ENCODE measurements at regions of chr19 and their contacts with region 1.

Region 1: GRCh38 chr19:9768175-9769112 is at the start of gene ZNF846:
- DNase-seq: peak; percentile 92 to 97 (median 95)
- H3K4me3 ChIP-seq: peak within 1 kb of the TSS; percentile 35 to 99 (median 70)
- H3K27ac ChIP-seq: peak within 1 kb of the TSS; percentile 74 to 94 (median 91)
- H3K4me1 ChIP-seq: peaks cover 10 to 13% of the 10 kb centered on the region in 2 donors
- H3K27me3 ChIP-seq: no peaks in the 10 kb centered on the region
- CTCF ChIP-seq: peak in 1 of 6 experiments; percentile 4
- POLR2A ChIP-seq: peak; percentile 40 to 81
- total RNA-seq, gene ZNF846: 7.1 to 20.3 (median 9.8) TPM

Region 2: DNA sequence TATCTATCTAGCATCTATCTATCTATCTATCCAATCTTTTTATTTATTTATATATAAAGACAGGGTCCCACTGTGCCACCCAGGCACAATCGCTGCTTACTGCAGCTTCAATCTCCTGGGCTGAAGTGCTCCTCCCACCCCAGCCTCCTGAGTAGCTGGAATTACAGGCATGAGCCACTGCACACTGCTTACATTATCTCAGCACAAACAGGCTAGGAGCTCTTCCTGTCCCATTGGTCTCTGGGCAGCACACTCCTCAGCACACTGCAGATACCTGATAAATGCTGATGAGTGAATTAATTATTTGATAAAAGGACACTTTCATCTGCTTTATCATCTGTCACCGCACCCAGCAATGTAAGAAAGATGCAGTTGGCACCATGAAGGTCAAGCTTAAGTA is 109.7 kb before region 1 on chr19:
- intact Hi-C with region 1: loop called in 1 of 2 experiments (anchors 10 kb)
- DNase-seq: no peak
- H3K4me3 ChIP-seq: no peak overlapping the region
- H3K27ac ChIP-seq: no peak overlapping the region
- H3K4me1 ChIP-seq: no peaks in the 10 kb centered on the region
- H3K27me3 ChIP-seq: no peaks in the 10 kb centered on the region
- CTCF ChIP-seq: no peak
- POLR2A ChIP-seq: no peak

Region 3: DNA sequence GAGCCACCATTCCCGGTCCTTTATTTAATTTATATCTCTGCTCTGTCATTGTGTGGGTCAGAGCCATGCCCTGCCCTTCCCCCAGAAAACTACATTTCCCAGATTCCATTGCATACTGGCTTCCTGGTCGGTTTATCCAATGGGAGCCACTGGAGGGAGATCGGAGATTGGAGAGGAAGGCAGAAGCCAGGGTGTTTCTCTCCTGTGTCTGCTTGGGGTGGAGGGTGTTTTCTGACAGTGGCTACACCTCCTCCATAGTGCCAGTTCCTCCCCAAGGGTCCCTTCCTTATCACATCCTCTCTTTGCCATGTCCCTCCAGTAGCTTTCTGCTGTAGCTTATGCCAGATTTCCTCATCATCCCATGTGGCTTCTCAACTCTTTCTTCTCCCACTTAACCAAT is 148.9 kb after region 1 on chr19:
- intact Hi-C with region 1: no loop called
- DNase-seq: peak in 6 of 7 donors; percentile 25 to 59 (median 46)
- H3K4me3 ChIP-seq: no peak overlapping the region
- H3K27ac ChIP-seq: no peak overlapping the region
- H3K4me1 ChIP-seq: peaks cover 5 to 13% of the 10 kb centered on the region in 2 donors
- H3K27me3 ChIP-seq: no peaks in the 10 kb centered on the region
- CTCF ChIP-seq: no peak
- POLR2A ChIP-seq: no peak

Region 4: DNA sequence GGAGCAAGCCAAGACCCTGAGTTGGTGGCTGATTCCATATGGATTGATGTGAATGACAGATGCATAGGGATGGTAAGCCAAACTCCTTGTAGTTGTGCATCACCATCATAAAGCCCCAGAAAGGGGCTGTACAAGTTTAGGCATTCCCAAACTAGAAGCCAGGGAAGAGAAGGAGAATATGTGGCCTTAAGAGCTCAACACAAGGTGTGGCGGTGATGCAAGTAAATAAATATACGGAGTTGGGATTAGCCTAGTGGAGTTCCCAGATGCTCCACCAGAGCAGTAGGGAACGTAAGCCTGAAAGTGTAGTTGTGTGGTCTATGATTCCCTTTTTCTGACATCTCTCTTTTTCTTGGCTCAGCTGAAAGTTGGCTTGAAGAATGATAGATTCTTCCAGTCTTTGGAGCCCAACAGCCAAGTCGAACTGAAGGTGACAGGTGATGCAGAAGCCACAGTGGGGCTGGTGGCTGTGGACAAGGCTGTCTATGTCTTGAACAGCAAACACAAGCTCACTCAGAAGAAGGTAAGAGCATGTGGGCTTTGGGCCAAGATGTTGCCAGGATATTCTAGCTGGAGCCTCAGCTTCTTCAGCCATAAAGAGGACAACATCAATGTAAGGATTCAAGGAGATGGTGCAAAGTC is 275.0 kb after region 1 on chr19:
- intact Hi-C with region 1: no loop called
- DNase-seq: no peak
- H3K4me3 ChIP-seq: no peak overlapping the region
- H3K27ac ChIP-seq: no peak overlapping the region
- H3K4me1 ChIP-seq: no peaks in the 10 kb centered on the region
- H3K27me3 ChIP-seq: no peaks in the 10 kb centered on the region
- CTCF ChIP-seq: no peak
- POLR2A ChIP-seq: no peak